Vagina (tissue), 2 donors: ENCODE measurements at regions of chr11 and their contacts with region 1.

Region 1: DNA sequence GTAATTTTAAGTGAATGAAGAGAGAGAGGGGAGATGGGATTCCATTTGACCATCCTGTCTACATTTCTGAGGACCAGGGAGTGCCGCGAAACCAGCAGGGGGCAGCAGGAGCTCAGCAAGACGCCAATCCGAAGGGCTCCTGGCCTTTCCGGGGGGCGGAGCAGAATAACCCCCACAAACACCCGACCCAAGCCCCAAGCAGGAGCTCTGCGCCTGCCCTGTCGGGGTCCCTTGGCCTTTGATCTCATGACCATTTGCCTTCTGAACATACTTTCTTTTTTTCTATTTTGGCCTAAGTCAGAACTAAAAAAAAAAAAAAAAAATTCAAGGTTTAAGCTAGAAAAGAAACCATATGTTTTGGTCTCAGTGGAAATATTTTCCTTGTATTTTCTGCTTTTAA is 21.9 kb upstream of the SCN2B start:
- DNase-seq: no peak
- H3K4me3 ChIP-seq: no peak overlapping the region
- H3K27ac ChIP-seq: no peak overlapping the region
- H3K4me1 ChIP-seq: peaks cover 8% of the 10 kb centered on the region
- H3K27me3 ChIP-seq: no peaks in the 10 kb centered on the region
- CTCF ChIP-seq: peak; percentile 51 to 88 (median 78)
- POLR2A ChIP-seq: no peak

Region 2: DNA sequence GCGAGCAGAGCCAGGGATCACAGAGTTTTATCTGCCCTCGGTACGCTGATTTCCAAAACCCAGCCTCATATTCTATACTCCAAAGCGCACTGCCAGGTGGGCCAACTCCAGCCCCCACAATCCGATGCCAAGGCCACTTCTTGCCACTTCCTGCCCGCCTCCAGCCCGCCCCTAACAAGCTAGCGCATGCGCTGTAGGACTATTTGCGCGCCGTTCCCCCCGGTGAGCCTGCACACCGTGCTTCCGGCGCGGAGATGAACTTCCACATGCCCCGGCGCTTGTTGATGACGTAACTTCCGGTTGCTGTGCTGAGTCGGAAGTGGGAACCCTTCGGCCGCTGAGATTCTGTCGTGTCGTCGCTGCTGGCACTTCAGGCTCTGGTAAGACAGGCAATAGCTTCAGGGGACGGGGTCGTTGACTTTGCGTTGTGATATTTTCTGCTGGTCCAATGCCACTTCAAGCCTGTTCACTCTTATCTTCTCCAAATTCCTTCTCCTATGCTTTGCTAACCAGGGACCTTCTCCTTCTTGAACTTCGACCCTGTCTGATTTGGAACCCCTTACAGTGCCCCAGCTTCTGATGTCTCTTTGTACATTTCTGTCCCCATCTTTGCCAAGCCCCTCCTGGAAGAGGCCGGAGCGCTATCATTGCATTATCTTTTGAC is 161.1 kb after region 1 on chr11 and contains the start of gene UBE4A:
- intact Hi-C with region 1: loop called (anchors 10 kb)
- DNase-seq: peak in 1 of 2 donors; percentile 94
- H3K4me3 ChIP-seq: peak within 1 kb of the TSS; percentile 67 to 75
- H3K27ac ChIP-seq: peak within 1 kb of the TSS; percentile 57
- H3K4me1 ChIP-seq: peaks cover 30% of the 10 kb centered on the region
- H3K27me3 ChIP-seq: no peaks in the 10 kb centered on the region
- CTCF ChIP-seq: no peak
- POLR2A ChIP-seq: peak in 1 of 2 donors; percentile 24
- total RNA-seq, gene UBE4A: 31.9 TPM